B cell (primary cell): ENCODE measurements at regions of chrX and their contacts with region 1.

Region 1: GRCh38 chrX:68828740-68829552 is at the start of gene EFNB1:
- DNase-seq: peak; percentile 91
- ATAC-seq: peak; percentile 92
- H3K4me3 ChIP-seq: peak within 1 kb of the TSS; percentile 58 to 80 (median 75)
- H3K4me3 Mint-ChIP-seq: peak within 1 kb of the TSS; percentile 97
- H3K27ac ChIP-seq: no peak within 1 kb of the TSS
- H3K27ac Mint-ChIP-seq: peak within 1 kb of the TSS; percentile 77
- H3K4me1 ChIP-seq: peaks cover 12 to 34% of the 10 kb centered on the region in 2 donors
- H3K4me1 Mint-ChIP-seq: peaks cover 23% of the 10 kb centered on the region
- H3K27me3 ChIP-seq: peaks cover 0 to 11% (median 4%) of the 10 kb centered on the region in 4 experiments
- H3K27me3 Mint-ChIP-seq: no peaks in the 10 kb centered on the region
- CTCF ChIP-seq: no peak
- total RNA-seq, gene EFNB1: 3.2 and 3.5 TPM in 2 replicates

Region 2: DNA sequence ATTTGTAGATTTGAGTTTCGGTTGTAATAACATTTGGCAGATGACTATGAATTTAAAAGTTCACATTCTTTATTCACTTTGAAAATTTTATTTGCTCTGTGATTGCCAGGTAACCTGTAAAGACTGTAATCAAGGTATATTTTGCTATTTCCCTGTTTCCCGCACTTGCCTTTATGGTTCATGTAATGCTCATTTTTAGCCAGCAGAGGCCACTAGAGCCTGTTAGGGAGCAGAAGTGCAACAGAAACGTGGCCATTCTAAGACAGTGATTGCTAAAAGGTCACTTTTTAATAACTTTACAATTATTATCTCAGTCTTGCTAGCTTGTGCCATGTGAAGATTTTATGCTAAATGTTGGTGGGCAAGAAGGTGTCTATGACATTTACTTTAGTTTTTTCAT is 317.7 kb before region 1 on chrX:
- CTCF ChIA-PET with region 1: no interaction called
- POLR2A ChIA-PET with region 1: no interaction called
- intact Hi-C with region 1: loop called (anchors 10 kb)
- DNase-seq: peak; percentile 52
- ATAC-seq: peak; percentile 73
- H3K4me3 ChIP-seq: no peak overlapping the region
- H3K4me3 Mint-ChIP-seq: no peak overlapping the region
- H3K27ac ChIP-seq: no peak overlapping the region
- H3K27ac Mint-ChIP-seq: no peak overlapping the region
- H3K4me1 ChIP-seq: no peaks in the 10 kb centered on the region
- H3K4me1 Mint-ChIP-seq: peaks cover 17% of the 10 kb centered on the region
- H3K27me3 ChIP-seq: no peaks in the 10 kb centered on the region
- H3K27me3 Mint-ChIP-seq: no peaks in the 10 kb centered on the region
- CTCF ChIP-seq: peak; percentile 74

Region 3: GRCh38 chrX:68784816-68785215 is 44.1 kb before region 1 on chrX:
- CTCF ChIA-PET with region 1: no interaction called
- POLR2A ChIA-PET with region 1: no interaction called
- intact Hi-C with region 1: no loop called
- DNase-seq: no peak
- ATAC-seq: no peak
- H3K4me3 ChIP-seq: no peak overlapping the region
- H3K4me3 Mint-ChIP-seq: no peak overlapping the region
- H3K27ac ChIP-seq: no peak overlapping the region
- H3K27ac Mint-ChIP-seq: no peak overlapping the region
- H3K4me1 ChIP-seq: no peaks in the 10 kb centered on the region
- H3K4me1 Mint-ChIP-seq: no peaks in the 10 kb centered on the region
- H3K27me3 ChIP-seq: no peaks in the 10 kb centered on the region
- H3K27me3 Mint-ChIP-seq: no peaks in the 10 kb centered on the region
- CTCF ChIP-seq: no peak

Region 4: GRCh38 chrX:69222103-69223090 is 393.5 kb after region 1 on chrX:
- CTCF ChIA-PET with region 1: interaction called, 48 read pairs
- POLR2A ChIA-PET with region 1: no interaction called
- intact Hi-C with region 1: no loop called
- DNase-seq: peak; percentile 68
- ATAC-seq: peak; percentile 56
- H3K4me3 ChIP-seq: no peak overlapping the region
- H3K4me3 Mint-ChIP-seq: no peak overlapping the region
- H3K27ac ChIP-seq: no peak overlapping the region
- H3K27ac Mint-ChIP-seq: no peak overlapping the region
- H3K4me1 ChIP-seq: peaks cover 0 to 4% of the 10 kb centered on the region in 2 donors
- H3K4me1 Mint-ChIP-seq: no peaks in the 10 kb centered on the region
- H3K27me3 ChIP-seq: peaks cover 0 to 3% (median 0%) of the 10 kb centered on the region in 4 experiments
- H3K27me3 Mint-ChIP-seq: peaks cover 3% of the 10 kb centered on the region
- CTCF ChIP-seq: peak; percentile 66

Region 5: DNA sequence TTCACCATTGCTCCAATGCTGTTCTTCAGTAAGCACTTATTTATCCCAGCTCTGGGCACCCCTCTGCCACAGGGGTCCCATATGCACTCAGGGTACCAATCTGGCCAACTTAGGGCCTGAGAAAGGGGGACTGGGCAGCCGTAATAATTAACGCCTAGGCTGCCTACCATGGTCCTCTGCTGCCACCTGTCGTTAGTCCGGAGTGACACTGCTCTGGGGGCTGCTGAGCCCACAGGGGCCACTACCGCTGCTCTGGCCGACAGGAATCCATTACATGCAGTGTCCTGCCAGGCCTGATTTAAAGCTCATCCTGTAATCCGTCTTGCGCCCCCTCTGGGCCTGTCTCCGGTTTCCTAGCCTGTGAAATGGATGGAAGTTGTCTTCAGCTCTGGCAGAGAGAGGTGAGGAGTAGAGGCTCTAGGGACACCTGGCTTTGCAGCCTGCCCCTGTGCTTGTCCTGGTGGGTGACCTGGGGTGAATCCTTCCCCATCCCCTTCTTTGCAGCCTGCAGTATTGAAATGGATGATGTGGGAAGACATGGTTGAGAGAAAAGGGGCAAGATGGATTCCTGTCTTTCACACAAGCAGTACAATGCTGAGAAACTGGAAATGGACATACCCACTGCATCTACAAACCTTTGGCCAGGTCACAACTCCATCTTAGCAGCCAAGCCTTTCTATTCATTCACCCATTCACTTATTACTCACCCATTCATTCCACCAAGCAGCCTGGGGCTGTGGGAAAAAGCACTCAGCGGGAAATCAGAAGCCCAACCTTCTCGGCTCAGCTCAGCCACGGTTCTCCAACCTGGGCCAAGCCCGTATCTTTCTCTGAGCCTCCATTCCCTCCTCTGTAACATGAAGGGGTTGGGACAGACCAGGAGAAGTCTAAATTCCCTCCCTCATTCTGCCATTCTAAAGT is 558.9 kb after region 1 on chrX:
- CTCF ChIA-PET with region 1: interaction called, 4 read pairs
- POLR2A ChIA-PET with region 1: no interaction called
- intact Hi-C with region 1: loop called (anchors 2 kb)
- DNase-seq: peak; percentile 22
- ATAC-seq: no peak
- H3K4me3 ChIP-seq: no peak overlapping the region
- H3K4me3 Mint-ChIP-seq: no peak overlapping the region
- H3K27ac ChIP-seq: no peak overlapping the region
- H3K27ac Mint-ChIP-seq: no peak overlapping the region
- H3K4me1 ChIP-seq: no peaks in the 10 kb centered on the region
- H3K4me1 Mint-ChIP-seq: no peaks in the 10 kb centered on the region
- H3K27me3 ChIP-seq: no peaks in the 10 kb centered on the region
- H3K27me3 Mint-ChIP-seq: no peaks in the 10 kb centered on the region
- CTCF ChIP-seq: peak; percentile 36

Region 6: DNA sequence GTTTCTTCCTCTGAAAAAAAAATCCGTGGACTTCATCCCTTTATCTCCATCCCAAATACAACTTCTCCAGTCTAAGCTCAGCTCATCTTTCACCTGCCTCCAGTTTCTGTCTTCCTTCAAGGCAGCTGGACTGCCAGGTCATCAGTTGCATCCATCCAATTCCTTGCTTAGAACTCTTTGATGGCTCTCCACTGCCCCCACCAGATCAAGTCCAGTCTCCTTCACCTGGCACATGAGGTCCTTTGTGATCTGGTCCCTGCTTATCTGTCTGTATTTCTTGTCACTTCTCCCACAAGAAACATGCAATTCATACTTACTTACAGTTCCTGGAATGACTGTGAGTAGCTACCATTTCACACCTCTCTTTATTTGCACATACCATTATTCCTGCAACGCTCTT is 1267.1 kb after region 1 on chrX:
- CTCF ChIA-PET with region 1: interaction called, 3 read pairs
- POLR2A ChIA-PET with region 1: no interaction called
- intact Hi-C with region 1: loop called (anchors 5 kb)
- DNase-seq: no peak
- ATAC-seq: no peak
- H3K4me3 ChIP-seq: no peak overlapping the region
- H3K4me3 Mint-ChIP-seq: no peak overlapping the region
- H3K27ac ChIP-seq: no peak overlapping the region
- H3K27ac Mint-ChIP-seq: no peak overlapping the region
- H3K4me1 ChIP-seq: no peaks in the 10 kb centered on the region
- H3K4me1 Mint-ChIP-seq: no peaks in the 10 kb centered on the region
- H3K27me3 ChIP-seq: peaks cover 0 to 7% (median 0%) of the 10 kb centered on the region in 4 experiments
- H3K27me3 Mint-ChIP-seq: peaks cover 9% of the 10 kb centered on the region
- CTCF ChIP-seq: no peak